AG04450 (cell line): ENCODE measurements at regions of chr4 and their contacts with region 1.

Region 1: DNA sequence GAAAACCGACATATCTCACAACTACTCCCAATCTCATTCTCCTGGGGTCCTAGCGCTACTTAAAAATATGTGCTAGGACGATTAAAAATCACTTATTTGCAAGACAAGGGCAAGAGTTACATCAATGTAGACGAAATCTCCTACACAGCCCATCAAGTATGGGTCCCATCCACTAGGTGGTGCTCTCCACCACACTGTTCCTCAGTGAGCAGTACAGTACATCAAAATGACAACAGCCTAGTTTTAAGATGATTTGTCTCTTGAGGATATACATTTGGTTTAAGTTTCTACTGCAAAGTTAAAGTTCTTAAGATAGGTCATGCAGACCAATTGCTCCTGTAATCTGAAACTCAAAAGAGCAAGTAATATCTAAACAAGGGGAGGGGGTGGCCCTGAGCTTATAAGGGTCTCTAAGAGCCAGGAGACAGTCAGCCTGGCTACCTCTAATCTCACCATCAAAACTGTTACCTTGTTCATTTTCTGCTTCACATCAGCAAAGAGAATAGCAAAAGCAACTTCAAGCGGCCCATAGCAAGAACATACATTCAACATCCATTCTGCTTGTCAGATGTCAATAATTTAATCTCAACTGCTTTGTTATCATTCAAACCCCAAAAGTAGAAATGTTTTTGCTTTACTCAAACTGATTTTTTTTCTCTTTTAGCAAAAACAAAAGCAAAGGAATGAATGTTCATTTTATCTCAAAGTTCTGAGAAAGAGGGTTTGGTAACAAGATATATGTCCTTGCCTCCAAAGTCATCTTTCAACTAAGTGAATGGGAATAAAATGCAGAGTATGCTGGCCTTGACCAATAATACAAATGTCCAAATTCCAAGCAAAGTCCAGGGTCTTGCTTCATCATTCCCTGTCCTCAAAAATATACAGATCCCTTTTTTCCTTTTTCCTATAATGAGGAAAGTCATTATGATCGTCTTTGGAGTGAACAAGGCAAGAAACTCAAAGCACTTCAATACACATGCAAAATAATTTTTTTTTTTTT is 53.1 kb downstream of the STX18 start:
- DNase-seq: peak; percentile 56
- H3K4me3 ChIP-seq: no peak overlapping the region
- H3K27ac ChIP-seq: no peak overlapping the region
- H3K27me3 ChIP-seq: no peaks in the 10 kb centered on the region
- CTCF ChIP-seq: peak; percentile 97

Region 2: GRCh38 chr4:4502694-4503311 is 14.1 kb after region 1 on chr4:
- CTCF ChIA-PET with region 1: interaction called, 10 read pairs
- POLR2A ChIA-PET with region 1: no interaction called
- DNase-seq: no peak
- H3K4me3 ChIP-seq: peak overlapping the region; percentile 20
- H3K27ac ChIP-seq: peak overlapping the region; percentile 11
- H3K27me3 ChIP-seq: no peaks in the 10 kb centered on the region
- CTCF ChIP-seq: no peak

Region 3: DNA sequence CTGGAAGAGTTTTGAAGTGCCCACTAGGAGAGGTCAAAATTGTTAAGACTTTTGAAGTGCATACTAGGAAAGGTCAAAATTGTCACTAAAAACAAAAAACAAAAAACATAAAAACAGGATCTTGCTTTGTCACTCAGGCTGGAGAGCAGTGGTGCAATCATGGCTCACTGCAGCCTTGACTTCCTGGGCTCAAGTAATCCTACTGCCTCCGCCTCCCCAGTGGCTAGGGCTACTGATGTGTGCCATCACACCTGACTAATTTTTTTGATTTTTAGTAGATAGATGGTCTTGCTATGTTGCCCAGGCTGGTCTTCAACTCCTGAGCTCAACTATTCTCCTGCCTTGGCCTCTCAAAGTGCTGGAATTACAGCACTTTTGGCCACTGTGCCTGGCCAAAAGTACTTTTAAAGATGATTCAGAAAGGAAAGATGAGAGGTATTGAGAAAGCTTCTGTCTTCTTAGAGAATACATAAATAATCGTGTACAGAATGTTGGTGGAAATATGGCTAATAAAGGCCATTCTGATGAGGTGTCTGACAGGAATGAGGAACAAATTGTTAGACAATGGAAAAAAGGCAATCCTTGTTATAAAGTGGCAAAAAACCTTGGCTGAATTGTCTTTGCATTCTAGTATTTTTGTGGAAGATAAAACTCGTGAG is 96.4 kb after region 1 on chr4:
- CTCF ChIA-PET with region 1: no interaction called
- POLR2A ChIA-PET with region 1: no interaction called
- DNase-seq: peak; percentile 51
- H3K4me3 ChIP-seq: no peak overlapping the region
- H3K27ac ChIP-seq: peak overlapping the region; percentile 80
- H3K27me3 ChIP-seq: no peaks in the 10 kb centered on the region
- CTCF ChIP-seq: no peak

Region 4: GRCh38 chr4:4880492-4880891 is 391.8 kb after region 1 on chr4:
- CTCF ChIA-PET with region 1: interaction called, 27 read pairs
- POLR2A ChIA-PET with region 1: no interaction called
- DNase-seq: no peak
- H3K4me3 ChIP-seq: no peak overlapping the region
- H3K27ac ChIP-seq: no peak overlapping the region
- H3K27me3 ChIP-seq: peaks cover 17% of the 10 kb centered on the region
- CTCF ChIP-seq: peak; percentile 49